Right ventricle myocardium inferior (tissue), 1 donor: ENCODE measurements at regions of chr19 and their contacts with region 1.

Region 1: GRCh38 chr19:47514869-47515588 is at the start of gene NAPA:
- DNase-seq: peak; percentile 100
- ATAC-seq: peak; percentile 99
- total RNA-seq, gene NAPA: 119 TPM

Region 2: DNA sequence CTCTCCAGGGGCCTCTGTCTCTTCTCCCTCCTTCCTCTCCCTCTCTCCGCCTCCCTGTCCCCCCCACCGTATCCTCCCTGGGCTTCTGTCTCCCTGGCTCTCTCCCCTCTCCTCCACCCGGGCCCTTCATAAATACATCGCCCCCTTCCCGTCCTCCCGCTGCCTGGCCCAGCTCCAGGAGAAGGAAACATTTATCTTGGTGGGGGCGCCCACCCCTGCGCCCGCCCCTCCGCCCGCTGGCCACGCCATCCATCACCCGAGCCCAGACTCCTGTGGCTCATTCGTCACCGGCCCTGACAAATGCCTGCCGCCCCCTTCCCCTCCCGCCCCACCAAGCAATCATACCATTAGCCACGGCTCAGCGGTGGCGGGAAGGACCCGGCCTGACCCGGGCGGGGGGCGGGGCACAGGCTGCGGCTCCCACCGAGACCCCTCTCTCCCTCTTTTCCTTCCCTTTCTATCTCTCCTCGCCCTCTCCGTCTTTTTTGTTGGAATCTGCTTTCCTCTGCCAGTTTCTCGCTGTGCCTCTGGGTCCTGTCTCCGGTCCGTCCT is 93.1 kb before region 1 on chr19:
- intact Hi-C with region 1: no loop called
- DNase-seq: no peak
- ATAC-seq: no peak

Region 3: GRCh38 chr19:47436712-47437401 is 78.2 kb before region 1 on chr19:
- intact Hi-C with region 1: loop called (anchors 1 kb)
- DNase-seq: peak; percentile 87
- ATAC-seq: peak; percentile 87

Region 4: GRCh38 chr19:47483800-47484690 is 31.0 kb before region 1 on chr19 and contains the start of gene KPTN:
- intact Hi-C with region 1: loop called (anchors 1 kb)
- DNase-seq: peak; percentile 94
- ATAC-seq: peak; percentile 93
- total RNA-seq, gene KPTN: 9.1 TPM

Region 5: GRCh38 chr19:47600246-47601179 is 85.5 kb after region 1 on chr19:
- intact Hi-C with region 1: loop called (anchors 1 kb)
- DNase-seq: peak; percentile 100
- ATAC-seq: peak; percentile 99

Region 6: GRCh38 chr19:47608074-47608918 is 93.3 kb after region 1 on chr19:
- intact Hi-C with region 1: loop called (anchors 2 kb)
- DNase-seq: peak; percentile 96
- ATAC-seq: peak; percentile 96

Region 7: GRCh38 chr19:47697863-47698609 is 183.0 kb after region 1 on chr19:
- intact Hi-C with region 1: loop called (anchors 5 kb)
- DNase-seq: peak; percentile 85
- ATAC-seq: peak; percentile 89